Heart left ventricle (tissue), 16 donors: ENCODE measurements at regions of chr2 and their contacts with region 1.

Region 1: DNA sequence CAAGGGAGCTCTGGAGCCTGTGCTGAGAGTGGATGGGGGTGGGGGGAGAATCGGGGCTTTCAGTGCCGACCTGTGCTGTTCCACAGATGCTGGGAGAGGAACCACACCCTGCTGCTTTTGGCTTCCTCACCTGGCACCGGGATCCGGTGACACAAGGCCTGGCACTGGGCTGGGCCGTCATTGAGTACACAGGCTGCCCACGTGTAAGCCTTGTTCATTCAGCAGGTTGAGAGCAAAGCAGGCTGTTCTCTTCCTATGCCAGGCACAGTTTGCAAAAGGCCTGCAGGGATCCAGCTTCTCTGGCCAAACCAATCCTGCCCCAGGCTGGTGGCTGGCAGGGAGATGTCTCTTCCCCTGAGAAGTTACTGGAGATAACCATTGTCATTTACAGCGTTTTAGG is 17.1 kb downstream of the TRIB2 start:
- DNase-seq: peak in 4 of 5 donors; percentile 45 to 79 (median 72)
- ATAC-seq: peak; percentile 68 to 79 (median 72)
- H3K4me3 ChIP-seq: no peak overlapping the region
- H3K27ac ChIP-seq: peak overlapping the region; percentile 51 to 83 (median 74)
- H3K4me1 ChIP-seq: peaks cover 31 to 96% (median 82%) of the 10 kb centered on the region in 12 donors
- H3K27me3 ChIP-seq: no peaks in the 10 kb centered on the region
- CTCF ChIP-seq: no peak
- POLR2A ChIP-seq: peak in 1 of 2 donors; percentile 27

Region 2: GRCh38 chr2:12787891-12788801 is 54.3 kb after region 1 on chr2:
- intact Hi-C with region 1: loop called in 1 of 10 experiments (anchors 5 kb)
- DNase-seq: peak in 4 of 5 donors; percentile 35 to 53 (median 46)
- ATAC-seq: peak; percentile 61 to 90 (median 79)
- H3K4me3 ChIP-seq: peak overlapping the region in 1 of 12 donors; percentile 1
- H3K27ac ChIP-seq: peak overlapping the region; percentile 25 to 77 (median 60)
- H3K4me1 ChIP-seq: peaks cover 0 to 19% (median 4%) of the 10 kb centered on the region in 12 donors
- H3K27me3 ChIP-seq: no peaks in the 10 kb centered on the region
- CTCF ChIP-seq: no peak
- POLR2A ChIP-seq: no peak

Region 3: GRCh38 chr2:12797815-12798214 is 64.0 kb after region 1 on chr2:
- intact Hi-C with region 1: loop called in 2 of 10 experiments (anchors 5 to 10 kb)
- DNase-seq: no peak
- ATAC-seq: peak; percentile 28 to 81 (median 73)
- H3K4me3 ChIP-seq: no peak overlapping the region
- H3K27ac ChIP-seq: peak overlapping the region in 11 of 12 donors; percentile 31 to 80 (median 64)
- H3K4me1 ChIP-seq: peaks cover 0 to 27% (median 6%) of the 10 kb centered on the region in 12 donors
- H3K27me3 ChIP-seq: no peaks in the 10 kb centered on the region
- CTCF ChIP-seq: no peak
- POLR2A ChIP-seq: no peak

Region 4: DNA sequence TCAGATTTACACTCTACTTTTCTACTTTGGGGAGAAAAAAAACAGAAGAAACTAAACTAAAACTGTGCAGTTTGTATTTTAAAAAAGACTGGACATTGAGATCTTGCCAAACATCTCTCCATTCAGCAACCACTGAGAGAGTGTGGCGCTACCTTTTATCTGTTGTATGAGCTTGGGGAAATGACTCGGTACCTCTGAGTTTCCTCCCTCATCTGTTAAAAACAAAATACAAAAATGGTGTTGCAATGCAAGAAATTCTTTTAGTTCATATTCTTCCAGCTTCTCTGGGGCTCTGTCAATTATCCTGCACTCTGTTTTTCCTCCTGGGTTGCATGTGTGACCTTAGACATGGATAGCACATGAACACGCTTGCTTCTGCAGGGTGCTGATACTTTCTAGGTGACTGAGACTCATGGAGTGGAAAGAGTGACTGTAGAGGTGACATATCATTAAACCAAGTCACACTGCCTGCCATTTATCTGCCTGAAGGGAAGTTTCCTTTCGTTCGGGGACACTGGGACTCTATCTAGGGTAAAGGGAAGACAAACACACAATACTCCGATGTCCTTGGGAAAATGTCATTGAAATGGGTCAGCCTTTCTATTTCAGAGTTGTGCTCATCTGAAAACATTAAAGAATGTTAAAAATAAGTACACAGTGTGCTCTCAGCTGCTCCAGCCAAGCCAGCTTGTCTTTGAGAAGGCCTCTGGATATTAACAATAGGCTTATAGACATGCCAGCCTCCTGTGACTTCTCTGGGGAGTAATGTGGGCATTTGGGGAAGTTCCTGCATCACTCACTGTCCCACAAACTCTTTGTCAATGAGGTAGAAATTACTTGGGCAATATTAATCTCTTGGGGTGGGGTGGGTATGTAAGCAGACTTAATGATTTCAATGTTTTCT is 74.3 kb after region 1 on chr2:
- intact Hi-C with region 1: loop called in 5 of 10 experiments (anchors 5 to 10 kb)
- DNase-seq: peak in 2 of 5 donors; percentile 41 to 48
- ATAC-seq: peak; percentile 74 to 90 (median 84)
- H3K4me3 ChIP-seq: no peak overlapping the region
- H3K27ac ChIP-seq: peak overlapping the region; percentile 42 to 87 (median 72)
- H3K4me1 ChIP-seq: peaks cover 9 to 58% (median 44%) of the 10 kb centered on the region in 12 donors
- H3K27me3 ChIP-seq: no peaks in the 10 kb centered on the region
- CTCF ChIP-seq: no peak
- POLR2A ChIP-seq: peak in 1 of 2 donors; percentile 17

Region 5: DNA sequence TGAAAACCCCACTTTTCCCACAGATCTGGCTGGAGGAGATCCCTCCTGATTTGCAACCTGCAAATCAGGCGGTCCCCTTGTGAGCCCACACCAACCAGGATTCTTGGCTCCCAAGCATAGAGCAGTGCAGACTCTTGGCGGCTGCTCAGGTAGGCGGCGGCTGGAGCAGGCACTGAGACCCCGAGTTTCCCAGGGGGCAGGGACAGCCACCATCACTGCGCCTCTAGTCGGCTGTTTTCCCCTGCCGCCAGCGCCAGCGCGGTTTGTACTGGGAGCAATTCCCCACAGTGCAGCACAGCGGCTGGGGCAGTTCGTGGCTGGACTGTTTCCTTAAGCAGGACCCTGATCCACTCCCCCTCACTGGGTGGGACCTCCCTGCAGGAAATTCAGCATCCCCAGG is 306.2 kb after region 1 on chr2:
- intact Hi-C with region 1: no loop called
- DNase-seq: peak in 1 of 5 donors; percentile 56
- ATAC-seq: no peak
- H3K4me3 ChIP-seq: no peak overlapping the region
- H3K27ac ChIP-seq: no peak overlapping the region
- H3K4me1 ChIP-seq: no peaks in the 10 kb centered on the region
- H3K27me3 ChIP-seq: peaks cover 0 to 9% (median 0%) of the 10 kb centered on the region in 9 donors
- CTCF ChIP-seq: no peak
- POLR2A ChIP-seq: no peak